OCI-LY7 (cell line): ENCODE measurements at regions of chr2 and their contacts with region 1.

Region 1: GRCh38 chr2:113889471-113890252 is at the start of gene ACTR3:
- DNase-seq: peak; percentile 99
- H3K4me3 ChIP-seq: peak within 1 kb of the TSS; percentile 82
- H3K27ac ChIP-seq: peak within 1 kb of the TSS; percentile 92
- H3K4me1 ChIP-seq: peaks cover 69% of the 10 kb centered on the region
- CTCF ChIP-seq: no peak
- total RNA-seq, gene ACTR3: 168 and 192 TPM in 2 replicates

Region 2: DNA sequence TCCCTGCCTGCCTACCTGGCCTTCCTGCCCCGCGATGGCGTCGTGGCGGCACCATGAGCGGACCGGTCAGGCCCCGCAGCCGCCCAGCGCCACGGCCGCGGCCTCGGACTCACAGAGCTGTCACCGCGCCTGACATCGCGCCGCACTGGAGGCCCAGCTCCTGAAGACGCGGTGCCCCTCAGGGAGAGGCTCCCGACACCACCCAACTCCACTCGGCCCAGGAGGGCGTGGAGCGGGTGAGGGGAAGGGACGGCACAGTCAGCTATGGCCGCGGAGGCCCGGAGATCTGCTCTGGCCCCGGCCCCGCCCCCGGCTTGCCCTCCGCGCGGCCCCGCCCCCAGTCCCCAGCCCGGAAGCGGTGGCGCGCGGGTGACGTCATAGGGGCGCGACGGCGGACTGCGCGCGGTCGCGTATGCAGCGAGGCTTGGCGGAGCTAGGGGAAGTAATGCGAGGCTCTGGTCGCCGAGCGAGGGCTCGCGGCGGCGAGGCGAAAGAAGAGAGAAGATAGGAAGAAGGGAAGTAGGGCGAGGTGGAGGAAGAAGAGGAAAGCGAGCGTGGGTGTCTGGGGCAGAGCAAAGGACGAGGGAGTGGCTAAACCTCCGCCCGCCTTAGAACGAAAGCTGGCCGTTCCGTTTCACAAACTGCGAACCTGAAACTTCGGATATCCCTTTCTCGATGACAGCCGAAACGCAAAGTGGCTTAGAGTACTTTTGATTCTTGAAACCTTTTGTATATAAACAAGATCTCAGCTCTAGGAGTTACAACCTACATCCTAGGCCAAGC is 133.1 kb before region 1 on chr2 and contains the start of gene SLC35F5:
- CTCF ChIA-PET with region 1: interaction called, 4 read pairs
- POLR2A ChIA-PET with region 1: interaction called, 6 read pairs
- intact Hi-C with region 1: loop called (anchors 1 kb)
- DNase-seq: peak; percentile 95
- H3K4me3 ChIP-seq: peak within 1 kb of the TSS; percentile 89
- H3K27ac ChIP-seq: peak within 1 kb of the TSS; percentile 93
- H3K4me1 ChIP-seq: peaks cover 25% of the 10 kb centered on the region
- CTCF ChIP-seq: no peak
- total RNA-seq, gene SLC35F5: 45.4 and 51.1 TPM in 2 replicates

Region 3: DNA sequence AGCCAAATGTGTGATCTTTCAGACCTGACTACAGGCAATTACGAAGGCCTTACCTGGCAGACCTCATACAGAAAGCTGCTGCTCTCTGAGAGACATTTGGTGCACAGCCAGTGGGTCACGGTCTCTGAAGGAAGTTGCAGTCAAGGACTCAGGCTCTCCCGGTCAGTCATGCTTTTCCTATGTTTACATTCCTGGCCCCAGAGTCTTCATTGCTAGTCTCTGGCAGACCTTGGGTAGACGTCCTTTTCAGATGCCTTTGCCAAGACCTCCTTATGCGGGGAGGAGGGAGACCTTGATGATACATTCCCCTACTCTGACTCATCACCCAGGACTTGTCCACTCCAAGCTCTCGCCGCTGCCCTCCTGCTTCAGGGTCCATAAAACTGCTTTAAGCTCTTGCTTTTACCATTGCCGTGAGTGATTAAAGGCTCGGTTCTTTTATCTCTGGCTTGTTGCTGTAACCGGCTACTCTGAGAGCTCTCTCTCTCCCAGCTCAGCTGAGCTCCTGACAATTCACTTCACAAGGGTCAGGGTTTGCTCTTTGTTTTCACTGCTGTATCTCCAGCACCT is 71.2 kb before region 1 on chr2:
- CTCF ChIA-PET with region 1: no interaction called
- POLR2A ChIA-PET with region 1: no interaction called
- intact Hi-C with region 1: no loop called
- DNase-seq: no peak
- H3K4me3 ChIP-seq: no peak overlapping the region
- H3K27ac ChIP-seq: no peak overlapping the region
- H3K4me1 ChIP-seq: no peaks in the 10 kb centered on the region
- CTCF ChIP-seq: no peak

Region 4: GRCh38 chr2:113858764-113859163 is 30.9 kb before region 1 on chr2:
- CTCF ChIA-PET with region 1: no interaction called
- POLR2A ChIA-PET with region 1: interaction called, 20 read pairs
- intact Hi-C with region 1: loop called (anchors 1 kb)
- DNase-seq: no peak
- H3K4me3 ChIP-seq: peak overlapping the region; percentile 37
- H3K27ac ChIP-seq: peak overlapping the region; percentile 100
- H3K4me1 ChIP-seq: peaks cover 97% of the 10 kb centered on the region
- CTCF ChIP-seq: no peak

Region 5: GRCh38 chr2:113867571-113867970 is 22.1 kb before region 1 on chr2:
- CTCF ChIA-PET with region 1: no interaction called
- POLR2A ChIA-PET with region 1: interaction called, 20 read pairs
- intact Hi-C with region 1: no loop called
- DNase-seq: no peak
- H3K4me3 ChIP-seq: peak overlapping the region; percentile 0
- H3K27ac ChIP-seq: peak overlapping the region; percentile 52
- H3K4me1 ChIP-seq: peaks cover 70% of the 10 kb centered on the region
- CTCF ChIP-seq: no peak

Region 6: GRCh38 chr2:113901943-113902342 is 12.3 kb after region 1 on chr2:
- CTCF ChIA-PET with region 1: no interaction called
- POLR2A ChIA-PET with region 1: interaction called, 18 read pairs
- intact Hi-C with region 1: no loop called
- DNase-seq: peak; percentile 56
- H3K4me3 ChIP-seq: peak overlapping the region; percentile 48
- H3K27ac ChIP-seq: peak overlapping the region; percentile 60
- H3K4me1 ChIP-seq: peaks cover 73% of the 10 kb centered on the region
- CTCF ChIP-seq: no peak

Region 7: GRCh38 chr2:113922784-113923183 is 33.1 kb after region 1 on chr2:
- CTCF ChIA-PET with region 1: no interaction called
- POLR2A ChIA-PET with region 1: interaction called, 4 read pairs
- intact Hi-C with region 1: loop called (anchors 2 kb)
- DNase-seq: no peak
- H3K4me3 ChIP-seq: no peak overlapping the region
- H3K27ac ChIP-seq: peak overlapping the region; percentile 78
- H3K4me1 ChIP-seq: peaks cover 37% of the 10 kb centered on the region
- CTCF ChIP-seq: no peak

Region 8: DNA sequence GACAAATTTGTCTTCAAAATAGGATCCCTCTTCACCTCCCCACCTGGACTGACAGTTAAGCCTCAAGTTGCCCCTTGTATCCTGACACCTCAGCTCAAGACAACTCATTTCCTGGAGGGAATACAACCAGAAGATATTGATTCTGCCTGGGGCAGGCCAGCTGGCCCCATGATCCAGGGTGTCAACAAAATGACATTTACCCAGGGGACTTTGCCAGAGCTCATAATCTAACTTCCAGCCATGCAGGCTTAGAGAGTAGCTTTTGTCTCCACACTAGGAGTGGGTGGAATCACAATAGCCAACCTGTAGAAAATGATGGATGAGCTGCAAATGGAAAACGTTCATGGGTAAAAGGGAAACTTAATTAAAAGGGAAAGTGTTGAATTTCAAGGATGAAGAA is 332.7 kb after region 1 on chr2:
- CTCF ChIA-PET with region 1: no interaction called
- POLR2A ChIA-PET with region 1: no interaction called
- intact Hi-C with region 1: no loop called
- DNase-seq: no peak
- H3K4me3 ChIP-seq: no peak overlapping the region
- H3K27ac ChIP-seq: no peak overlapping the region
- H3K4me1 ChIP-seq: no peaks in the 10 kb centered on the region
- CTCF ChIP-seq: no peak